Naive thymus-derived CD4-positive, alpha-beta T cell (primary cell): ENCODE measurements at regions of chr16 and their contacts with region 1.

Region 1: GRCh38 chr16:68843482-68844210 is at the start of gene TANGO6:
- DNase-seq: peak; percentile 83 to 94 (median 89)
- ATAC-seq: peak; percentile 98
- H3K4me3 ChIP-seq: peak within 1 kb of the TSS; percentile 86
- H3K4me3 Mint-ChIP-seq: peak within 1 kb of the TSS; percentile 81 to 99 (median 88)
- H3K27ac ChIP-seq: peak within 1 kb of the TSS; percentile 85
- H3K27ac Mint-ChIP-seq: peak within 1 kb of the TSS; percentile 69 to 97 (median 90)
- H3K4me1 ChIP-seq: peaks cover 7 to 15% of the 10 kb centered on the region in 2 donors
- H3K4me1 Mint-ChIP-seq: peaks cover 20 to 41% (median 30%) of the 10 kb centered on the region in 7 donors
- H3K27me3 ChIP-seq: no peaks in the 10 kb centered on the region
- H3K27me3 Mint-ChIP-seq: no peaks in the 10 kb centered on the region
- total RNA-seq, gene TANGO6: 23.9 to 40.4 (median 36.6) TPM

Region 2: DNA sequence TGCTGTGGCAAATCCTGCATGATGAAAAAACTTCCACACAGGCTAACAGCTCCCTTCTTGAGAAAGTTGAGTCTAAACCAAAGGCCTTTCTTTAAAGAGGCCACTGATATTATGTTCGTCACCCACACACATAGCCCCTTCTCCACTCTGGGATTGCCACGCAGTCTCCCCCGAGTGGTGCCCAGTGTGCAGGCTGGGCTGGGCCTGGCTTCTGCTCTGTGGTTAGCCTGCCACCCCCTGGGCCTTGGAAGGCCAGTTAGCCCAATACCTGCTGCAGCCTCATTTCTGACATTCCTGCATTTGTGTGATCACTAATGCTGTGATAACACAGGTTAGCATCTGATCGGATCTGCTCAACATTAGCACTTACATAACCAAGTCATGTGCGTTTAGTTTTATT is 153.7 kb before region 1 on chr16:
- CTCF ChIA-PET with region 1: no interaction called
- POLR2A ChIA-PET with region 1: no interaction called
- intact Hi-C with region 1: no loop called
- DNase-seq: no peak
- ATAC-seq: no peak
- H3K4me3 ChIP-seq: no peak overlapping the region
- H3K4me3 Mint-ChIP-seq: no peak overlapping the region
- H3K27ac ChIP-seq: no peak overlapping the region
- H3K27ac Mint-ChIP-seq: no peak overlapping the region
- H3K4me1 ChIP-seq: no peaks in the 10 kb centered on the region
- H3K4me1 Mint-ChIP-seq: peaks cover 0 to 2% (median 0%) of the 10 kb centered on the region in 7 donors
- H3K27me3 ChIP-seq: no peaks in the 10 kb centered on the region
- H3K27me3 Mint-ChIP-seq: peaks cover 0 to under 1% (median 0%) of the 10 kb centered on the region in 5 donors

Region 3: GRCh38 chr16:68704232-68704867 is 139.3 kb before region 1 on chr16:
- CTCF ChIA-PET with region 1: no interaction called
- POLR2A ChIA-PET with region 1: no interaction called
- intact Hi-C with region 1: loop called in 1 of 2 experiments (anchors 1 kb)
- DNase-seq: peak in 8 of 9 donors; percentile 9 to 66 (median 31)
- ATAC-seq: peak; percentile 72
- H3K4me3 ChIP-seq: no peak overlapping the region
- H3K4me3 Mint-ChIP-seq: no peak overlapping the region
- H3K27ac ChIP-seq: no peak overlapping the region
- H3K27ac Mint-ChIP-seq: no peak overlapping the region
- H3K4me1 ChIP-seq: no peaks in the 10 kb centered on the region
- H3K4me1 Mint-ChIP-seq: peaks cover 0 to 4% (median 0%) of the 10 kb centered on the region in 7 donors
- H3K27me3 ChIP-seq: no peaks in the 10 kb centered on the region
- H3K27me3 Mint-ChIP-seq: no peaks in the 10 kb centered on the region

Region 4: GRCh38 chr16:69064764-69065313 is 221.2 kb after region 1 on chr16:
- CTCF ChIA-PET with region 1: no interaction called
- POLR2A ChIA-PET with region 1: no interaction called
- intact Hi-C with region 1: no loop called
- DNase-seq: no peak
- ATAC-seq: no peak
- H3K4me3 ChIP-seq: no peak overlapping the region
- H3K4me3 Mint-ChIP-seq: no peak overlapping the region
- H3K27ac ChIP-seq: no peak overlapping the region
- H3K27ac Mint-ChIP-seq: no peak overlapping the region
- H3K4me1 ChIP-seq: no peaks in the 10 kb centered on the region
- H3K4me1 Mint-ChIP-seq: peaks cover 0 to 2% (median 0%) of the 10 kb centered on the region in 7 donors
- H3K27me3 ChIP-seq: no peaks in the 10 kb centered on the region
- H3K27me3 Mint-ChIP-seq: no peaks in the 10 kb centered on the region

Region 5: DNA sequence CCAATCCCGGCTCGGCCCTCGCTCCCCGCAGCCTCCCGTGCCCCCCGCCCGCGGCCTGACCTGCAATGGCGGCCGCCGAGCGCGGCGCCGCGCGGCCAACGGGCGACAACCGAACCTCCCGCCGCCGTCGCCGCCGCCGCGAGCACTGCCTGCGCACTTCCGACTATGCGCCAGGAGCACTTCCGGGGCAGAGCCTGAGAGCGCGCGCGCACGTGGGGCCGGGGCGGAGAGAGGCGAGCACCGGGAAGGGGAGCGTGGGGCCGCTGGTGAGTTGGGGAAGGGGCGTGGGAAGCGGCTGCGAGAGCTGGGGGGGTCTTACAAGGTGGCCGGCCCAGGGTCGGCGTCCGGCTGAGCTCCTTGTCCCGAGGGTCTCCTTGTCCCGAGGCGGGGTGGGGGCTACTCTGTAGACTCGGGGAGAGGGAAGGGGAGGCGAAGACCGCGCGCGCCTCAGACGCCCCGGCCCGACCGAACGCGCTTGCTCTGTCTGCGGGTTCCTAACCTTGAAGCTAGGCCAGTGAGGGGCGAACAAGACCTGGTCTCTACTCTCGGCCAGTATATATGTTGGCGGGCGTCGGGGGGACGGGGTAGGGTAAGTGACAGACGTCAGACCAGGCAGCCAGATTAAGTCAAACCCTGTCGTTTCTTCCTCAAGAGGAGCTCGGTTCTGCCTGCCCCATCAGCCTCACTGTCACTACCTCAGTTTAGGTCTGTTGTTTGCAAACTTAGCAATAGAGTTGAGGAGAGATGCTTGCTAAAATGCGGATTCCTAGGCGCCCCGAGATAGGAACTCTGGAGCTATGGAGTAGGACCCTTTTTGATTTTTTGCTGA is 289.0 kb after region 1 on chr16 and contains the starts of genes CHTF8 and UTP4:
- CTCF ChIA-PET with region 1: no interaction called
- POLR2A ChIA-PET with region 1: interaction called, 6 read pairs
- intact Hi-C with region 1: loop called in 1 of 2 experiments (anchors 2 kb)
- DNase-seq: peak; percentile 81 to 91 (median 87)
- ATAC-seq: peak; percentile 95
- H3K4me3 ChIP-seq: peak within 1 kb of the TSS; percentile 80
- H3K4me3 Mint-ChIP-seq: peak within 1 kb of the TSS; percentile 91 to 97 (median 94)
- H3K27ac ChIP-seq: peak within 1 kb of the TSS; percentile 88
- H3K27ac Mint-ChIP-seq: peak within 1 kb of the TSS; percentile 85 to 97 (median 95)
- H3K4me1 ChIP-seq: peaks cover 12 to 23% of the 10 kb centered on the region in 2 donors
- H3K4me1 Mint-ChIP-seq: peaks cover 16 to 71% (median 61%) of the 10 kb centered on the region in 7 donors
- H3K27me3 ChIP-seq: no peaks in the 10 kb centered on the region
- H3K27me3 Mint-ChIP-seq: no peaks in the 10 kb centered on the region
- total RNA-seq, gene CHTF8: 53.3 to 142 (median 133) TPM
- total RNA-seq, gene UTP4: 31.9 to 56.5 (median 35.1) TPM

Region 6: GRCh38 chr16:69310653-69311532 is 467.2 kb after region 1 on chr16 and contains the start of gene VPS4A:
- CTCF ChIA-PET with region 1: no interaction called
- POLR2A ChIA-PET with region 1: no interaction called
- intact Hi-C with region 1: loop called (anchors 1 kb)
- DNase-seq: peak; percentile 95 to 99 (median 97)
- ATAC-seq: peak; percentile 99
- H3K4me3 ChIP-seq: peak within 1 kb of the TSS; percentile 74
- H3K4me3 Mint-ChIP-seq: peak within 1 kb of the TSS; percentile 90 to 100 (median 99)
- H3K27ac ChIP-seq: peak within 1 kb of the TSS; percentile 94
- H3K27ac Mint-ChIP-seq: peak within 1 kb of the TSS; percentile 92 to 99 (median 95)
- H3K4me1 ChIP-seq: peaks cover 8 to 10% of the 10 kb centered on the region in 2 donors
- H3K4me1 Mint-ChIP-seq: peaks cover 17 to 36% (median 29%) of the 10 kb centered on the region in 7 donors
- H3K27me3 ChIP-seq: no peaks in the 10 kb centered on the region
- H3K27me3 Mint-ChIP-seq: no peaks in the 10 kb centered on the region
- total RNA-seq, gene VPS4A: 36.7 to 53.7 (median 46.9) TPM

Region 7: DNA sequence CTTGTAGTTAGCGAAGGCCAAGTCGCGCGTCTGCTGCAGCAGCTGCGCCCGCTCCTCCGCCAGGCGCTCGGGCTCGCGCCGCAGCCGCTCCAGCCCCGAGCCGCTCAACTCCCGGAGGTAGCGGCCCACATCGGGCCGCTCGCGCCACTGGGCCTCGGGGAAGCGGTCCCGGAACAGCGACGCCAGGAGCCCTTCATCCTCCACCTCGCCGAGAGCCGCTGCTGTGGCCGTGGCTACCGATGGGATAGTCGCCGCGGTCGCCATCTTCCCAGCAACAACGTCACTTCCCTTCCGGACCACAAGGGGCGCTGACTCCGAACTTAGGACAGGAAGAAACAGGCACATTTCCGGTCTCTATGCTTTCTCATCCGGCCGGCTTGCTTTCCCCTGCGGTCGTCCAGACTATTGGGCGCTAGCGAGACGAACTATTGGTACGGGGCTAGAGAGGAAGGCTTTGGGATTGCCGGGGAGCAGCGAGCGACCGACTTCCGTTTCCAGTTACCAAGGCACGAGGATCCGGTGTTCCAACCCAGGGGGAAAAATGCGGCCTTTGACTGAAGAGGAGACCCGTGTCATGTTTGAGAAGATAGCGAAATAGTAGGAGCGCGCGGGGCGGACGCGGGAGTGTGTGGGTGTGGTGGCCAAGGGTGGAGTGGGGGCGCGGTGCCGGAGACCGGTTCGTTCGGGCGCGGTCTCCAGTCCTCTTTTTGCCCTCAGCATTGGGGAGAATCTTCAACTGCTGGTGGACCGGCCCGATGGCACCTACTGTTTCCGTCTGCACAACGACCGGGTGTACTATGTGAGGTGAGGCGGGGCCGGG is 495.9 kb after region 1 on chr16 and contains the starts of genes COG8 and NIP7:
- CTCF ChIA-PET with region 1: no interaction called
- POLR2A ChIA-PET with region 1: no interaction called
- intact Hi-C with region 1: loop called (anchors 1 to 5 kb)
- DNase-seq: peak; percentile 78 to 91 (median 90)
- ATAC-seq: peak; percentile 95
- H3K4me3 ChIP-seq: peak within 1 kb of the TSS; percentile 80
- H3K4me3 Mint-ChIP-seq: peak within 1 kb of the TSS; percentile 97 to 100 (median 99)
- H3K27ac ChIP-seq: peak within 1 kb of the TSS; percentile 86
- H3K27ac Mint-ChIP-seq: peak within 1 kb of the TSS; percentile 95 to 99 (median 98)
- H3K4me1 ChIP-seq: peaks cover 20 to 25% of the 10 kb centered on the region in 2 donors
- H3K4me1 Mint-ChIP-seq: peaks cover 31 to 70% (median 49%) of the 10 kb centered on the region in 7 donors
- H3K27me3 ChIP-seq: no peaks in the 10 kb centered on the region
- H3K27me3 Mint-ChIP-seq: no peaks in the 10 kb centered on the region
- total RNA-seq, gene COG8: 29.5 to 73.7 (median 37.4) TPM
- total RNA-seq, gene NIP7: 22.1 to 40.9 (median 30.3) TPM